GM13977 (cell line): ENCODE measurements at regions of chr13 and their contacts with region 1.

Region 1: GRCh38 chr13:28636674-28637317 is 22.1 kb upstream of the POMP start:
- DNase-seq: peak; percentile 45
- CTCF ChIP-seq: peak; percentile 81

Region 2: GRCh38 chr13:26946684-26947343 is 1690.0 kb before region 1 on chr13:
- in situ Hi-C with region 1: no loop called
- DNase-seq: peak; percentile 69
- CTCF ChIP-seq: peak; percentile 65

Region 3: DNA sequence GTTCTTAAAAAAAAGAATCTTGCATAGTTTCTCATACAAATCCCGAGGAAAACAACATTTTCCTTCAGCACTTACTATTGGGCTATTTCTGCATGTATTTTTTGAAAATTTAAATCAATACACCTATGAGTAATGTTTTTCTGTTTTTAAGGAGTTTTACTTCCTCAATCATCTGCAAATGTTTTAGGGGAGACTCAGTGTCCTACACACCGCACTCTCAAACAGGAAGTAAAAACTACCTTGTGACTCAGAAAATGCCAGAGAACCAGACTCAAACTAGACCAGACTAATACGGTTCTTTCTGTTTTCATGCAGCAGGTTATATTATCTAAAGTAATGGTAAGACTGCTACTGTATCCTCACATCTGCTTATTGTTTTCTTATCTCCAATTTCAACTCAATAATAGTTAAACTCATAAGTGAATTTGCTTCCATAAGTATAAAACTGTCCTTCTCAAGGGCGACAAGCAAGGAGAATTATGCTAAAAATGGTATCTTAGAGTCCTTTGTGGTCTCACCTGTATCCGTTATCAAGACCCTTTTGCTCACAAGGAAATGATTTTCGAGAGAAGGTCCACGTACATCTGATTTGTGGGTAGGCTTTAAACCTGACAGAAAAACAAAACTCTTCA is 588.9 kb before region 1 on chr13:
- in situ Hi-C with region 1: loop called (anchors 25 kb)
- DNase-seq: peak; percentile 72
- CTCF ChIP-seq: no peak

Region 4: DNA sequence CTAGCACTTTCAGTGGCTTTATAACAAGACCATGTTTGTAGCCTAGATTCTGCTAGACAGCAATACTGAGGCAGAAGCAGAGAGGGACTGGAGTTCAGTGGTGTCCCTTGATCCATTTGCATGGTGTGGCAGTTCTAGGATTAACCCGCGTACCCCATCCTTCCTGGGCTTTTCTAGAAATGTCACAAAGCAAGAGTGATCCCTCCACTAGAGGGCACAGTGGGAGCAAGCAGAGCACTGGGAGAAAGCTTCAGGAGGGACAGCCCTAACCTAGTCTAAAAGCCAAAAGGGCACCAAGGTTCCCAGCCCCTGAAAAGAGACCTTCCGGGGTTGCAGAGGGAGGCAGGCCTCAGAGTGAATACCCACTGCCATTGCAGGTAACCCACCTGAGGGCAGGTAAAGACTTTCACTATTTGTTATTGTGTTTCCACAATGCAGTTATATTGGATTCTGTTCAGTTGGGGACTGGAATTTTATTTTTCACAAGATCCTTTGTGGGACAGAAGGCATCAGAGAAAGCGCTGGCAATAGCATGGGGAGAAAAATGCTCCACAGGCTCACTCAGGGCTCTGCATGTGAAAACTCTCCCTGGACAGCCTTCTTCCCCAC is 312.5 kb before region 1 on chr13:
- in situ Hi-C with region 1: loop called (anchors 5 kb)
- DNase-seq: peak; percentile 82
- CTCF ChIP-seq: peak; percentile 81